ENCODE measurements at regions of chr4 and their contacts with region 1.

Region 1: GRCh38 chr4:176340871-176341685 is 21.3 kb downstream of the SPCS3 start:
- DNase-seq: no peak
- ATAC-seq: peak; percentile 57; the same call in 1 of the 2 replicates
- H3K4me3 ChIP-seq: no peak overlapping the region
- H3K27ac ChIP-seq: no peak overlapping the region
- H3K4me1 ChIP-seq: no peaks in the 10 kb centered on the region
- H3K27me3 ChIP-seq: no peaks in the 10 kb centered on the region
- CTCF ChIP-seq: peak; percentile 44 to 71 (median 66)
- POLR2A ChIP-seq: no peak
- RAD21 ChIP-seq: peak; percentile 76

Region 2: DNA sequence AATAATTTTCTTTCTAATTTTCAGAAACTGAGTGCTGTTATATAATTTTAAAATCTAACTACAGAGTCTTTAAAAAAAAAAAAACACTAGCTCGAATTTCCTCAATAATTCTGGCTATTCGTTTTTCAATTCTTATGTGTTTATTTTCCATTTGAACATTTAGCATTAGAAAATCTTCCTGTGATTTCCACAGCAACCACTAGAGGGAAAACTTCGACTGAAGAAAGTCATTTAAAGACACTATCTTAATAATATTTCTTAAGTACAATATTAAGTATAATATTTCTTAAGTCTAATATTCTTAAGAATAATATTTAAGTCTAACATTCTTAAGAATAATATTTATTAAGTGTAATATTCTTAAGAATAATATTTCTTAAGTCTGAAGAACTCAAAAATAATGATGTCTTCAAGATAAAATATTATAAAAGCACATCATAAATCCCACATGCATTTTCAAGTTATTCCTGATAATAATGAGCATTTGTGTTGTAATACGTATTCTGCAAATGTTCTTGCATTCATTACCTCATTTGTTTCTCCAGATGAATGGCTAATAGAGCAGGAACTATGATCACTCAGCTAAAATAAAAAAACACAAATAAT is 393.9 kb before region 1 on chr4:
- CTCF ChIA-PET with region 1: interaction called, 6 read pairs
- POLR2A ChIA-PET with region 1: no interaction called
- RAD21 ChIA-PET with region 1: no interaction called
- intact Hi-C with region 1: loop called (anchors 2 kb)
- DNase-seq: peak; percentile 27
- ATAC-seq: no peak
- H3K4me3 ChIP-seq: no peak overlapping the region
- H3K27ac ChIP-seq: no peak overlapping the region
- H3K4me1 ChIP-seq: no peaks in the 10 kb centered on the region
- H3K27me3 ChIP-seq: no peaks in the 10 kb centered on the region
- CTCF ChIP-seq: peak; percentile 41 to 52 (median 47); a peak in 4 of 6 replicates
- POLR2A ChIP-seq: no peak
- RAD21 ChIP-seq: peak; percentile 56; the same call in 1 of the 2 replicates

Region 3: GRCh38 chr4:176034499-176034898 is 306.6 kb before region 1 on chr4:
- CTCF ChIA-PET with region 1: interaction called, 16 read pairs
- POLR2A ChIA-PET with region 1: no interaction called
- RAD21 ChIA-PET with region 1: interaction called in 1 of 2 experiments, 3 read pairs
- intact Hi-C with region 1: loop called (anchors 1 kb)
- DNase-seq: peak; percentile 27
- ATAC-seq: no peak
- H3K4me3 ChIP-seq: no peak overlapping the region
- H3K27ac ChIP-seq: no peak overlapping the region
- H3K4me1 ChIP-seq: no peaks in the 10 kb centered on the region
- H3K27me3 ChIP-seq: no peaks in the 10 kb centered on the region
- CTCF ChIP-seq: peak in 2 of 3 experiments; percentile 50 to 54; a peak in 3 of 6 replicates
- POLR2A ChIP-seq: no peak
- RAD21 ChIP-seq: peak; percentile 74

Region 4: DNA sequence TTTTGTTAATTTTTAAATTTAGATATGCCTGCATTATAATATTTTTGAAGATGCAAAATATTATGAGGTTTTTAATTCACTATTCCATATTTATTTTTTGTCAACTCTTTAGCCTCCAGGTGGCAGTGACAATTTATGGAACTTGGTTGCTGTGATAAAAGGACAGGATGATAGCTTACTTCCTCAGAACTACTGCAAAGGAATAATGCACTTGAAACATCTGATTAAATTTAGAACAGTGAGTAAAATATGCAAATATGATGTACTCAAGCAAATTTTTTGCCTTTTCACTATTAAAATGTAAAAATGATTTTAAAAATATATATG is 190.8 kb before region 1 on chr4:
- CTCF ChIA-PET with region 1: interaction called, 34 read pairs
- POLR2A ChIA-PET with region 1: no interaction called
- RAD21 ChIA-PET with region 1: interaction called in 1 of 2 experiments, 3 read pairs
- intact Hi-C with region 1: loop called (anchors 1 kb)
- DNase-seq: peak; percentile 23
- ATAC-seq: peak; percentile 55; the same call in 1 of the 2 replicates
- H3K4me3 ChIP-seq: no peak overlapping the region
- H3K27ac ChIP-seq: no peak overlapping the region
- H3K4me1 ChIP-seq: no peaks in the 10 kb centered on the region
- H3K27me3 ChIP-seq: no peaks in the 10 kb centered on the region
- CTCF ChIP-seq: peak; percentile 19 to 73 (median 58); a peak in 5 of 6 replicates
- POLR2A ChIP-seq: no peak
- RAD21 ChIP-seq: peak; percentile 82